RWPE1 (cell line): ENCODE measurements at regions of chr2 and their contacts with region 1.

Region 1: GRCh38 chr2:209423562-209424198 is at the start of gene MAP2:
- DNase-seq: peak; percentile 78
- H3K27ac ChIP-seq: no peak within 1 kb of the TSS
- CTCF ChIP-seq: peak; percentile 91

Region 2: GRCh38 chr2:209556354-209556961 is 132.8 kb after region 1 on chr2:
- CTCF ChIA-PET with region 1: interaction called, 13 read pairs
- POLR2A ChIA-PET with region 1: no interaction called
- DNase-seq: peak; percentile 55
- H3K27ac ChIP-seq: no peak overlapping the region
- CTCF ChIP-seq: peak; percentile 51

Region 3: GRCh38 chr2:209577376-209578357 is 154.0 kb after region 1 on chr2:
- CTCF ChIA-PET with region 1: interaction called, 13 read pairs
- POLR2A ChIA-PET with region 1: no interaction called
- DNase-seq: peak; percentile 10
- H3K27ac ChIP-seq: no peak overlapping the region
- CTCF ChIP-seq: peak; percentile 33